ENCODE measurements at regions of chr1 and their contacts with region 1.

Region 1: GRCh38 chr1:155277070-155277895 is at the start of gene HCN3:
- DNase-seq: peak; percentile 98
- H3K4me3 ChIP-seq: peak within 1 kb of the TSS; percentile 82
- H3K27ac ChIP-seq: peak within 1 kb of the TSS; percentile 21
- H3K4me1 ChIP-seq: peaks cover 39% of the 10 kb centered on the region
- CTCF ChIP-seq: peak; percentile 79
- total RNA-seq, gene HCN3: 4.9 and 6.7 TPM in 2 replicates

Region 2: DNA sequence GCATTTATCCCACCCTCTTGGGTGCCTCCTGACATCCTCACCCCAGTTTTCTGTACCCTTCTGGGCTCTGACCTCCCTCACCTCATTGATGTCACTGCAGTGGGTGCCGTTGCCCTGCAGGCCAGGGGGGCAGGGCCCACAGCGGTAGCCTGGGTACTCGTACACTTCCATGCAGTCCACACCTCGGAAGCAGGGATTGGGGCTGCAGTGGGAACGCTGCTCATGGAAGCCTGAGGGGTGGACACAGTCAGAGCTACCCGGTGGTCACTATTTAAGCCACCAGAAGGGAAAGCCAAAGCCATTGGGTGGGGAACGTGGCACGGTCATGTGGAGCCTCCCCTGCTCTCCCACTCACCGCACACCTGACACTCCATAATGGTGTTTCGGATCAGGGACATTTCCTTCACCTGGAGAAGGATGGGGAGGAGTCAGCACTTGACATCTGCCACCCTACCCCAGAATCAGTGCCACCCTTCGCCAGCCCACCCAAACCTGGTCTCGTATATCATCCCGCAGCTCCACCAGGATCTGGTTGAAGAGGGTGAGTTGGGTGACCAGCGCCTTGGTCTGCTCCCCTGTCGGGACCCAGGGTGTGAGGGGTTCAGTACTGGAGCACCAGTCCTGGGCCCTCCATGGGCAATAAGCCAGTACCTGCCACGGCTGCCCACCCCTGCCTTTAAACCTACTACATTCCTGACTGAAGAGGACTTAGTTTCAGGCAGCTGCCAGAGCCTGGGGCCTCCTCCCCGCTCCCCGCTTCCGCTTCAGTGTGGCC is 74.4 kb before region 1 on chr1:
- CTCF ChIA-PET with region 1: no interaction called
- POLR2A ChIA-PET with region 1: no interaction called
- intact Hi-C with region 1: no loop called
- DNase-seq: no peak
- H3K4me3 ChIP-seq: no peak overlapping the region
- H3K27ac ChIP-seq: no peak overlapping the region
- H3K4me1 ChIP-seq: peaks cover 11% of the 10 kb centered on the region
- CTCF ChIP-seq: no peak

Region 3: GRCh38 chr1:155261852-155262673 is 15.2 kb before region 1 on chr1 and contains the start of gene SCAMP3:
- CTCF ChIA-PET with region 1: no interaction called
- POLR2A ChIA-PET with region 1: interaction called, 13 read pairs
- intact Hi-C with region 1: no loop called
- DNase-seq: peak; percentile 96
- H3K4me3 ChIP-seq: peak within 1 kb of the TSS; percentile 84
- H3K27ac ChIP-seq: peak within 1 kb of the TSS; percentile 51
- H3K4me1 ChIP-seq: peaks cover 17% of the 10 kb centered on the region
- CTCF ChIP-seq: no peak
- total RNA-seq, gene SCAMP3: 45.4 and 58.3 TPM in 2 replicates

Region 4: DNA sequence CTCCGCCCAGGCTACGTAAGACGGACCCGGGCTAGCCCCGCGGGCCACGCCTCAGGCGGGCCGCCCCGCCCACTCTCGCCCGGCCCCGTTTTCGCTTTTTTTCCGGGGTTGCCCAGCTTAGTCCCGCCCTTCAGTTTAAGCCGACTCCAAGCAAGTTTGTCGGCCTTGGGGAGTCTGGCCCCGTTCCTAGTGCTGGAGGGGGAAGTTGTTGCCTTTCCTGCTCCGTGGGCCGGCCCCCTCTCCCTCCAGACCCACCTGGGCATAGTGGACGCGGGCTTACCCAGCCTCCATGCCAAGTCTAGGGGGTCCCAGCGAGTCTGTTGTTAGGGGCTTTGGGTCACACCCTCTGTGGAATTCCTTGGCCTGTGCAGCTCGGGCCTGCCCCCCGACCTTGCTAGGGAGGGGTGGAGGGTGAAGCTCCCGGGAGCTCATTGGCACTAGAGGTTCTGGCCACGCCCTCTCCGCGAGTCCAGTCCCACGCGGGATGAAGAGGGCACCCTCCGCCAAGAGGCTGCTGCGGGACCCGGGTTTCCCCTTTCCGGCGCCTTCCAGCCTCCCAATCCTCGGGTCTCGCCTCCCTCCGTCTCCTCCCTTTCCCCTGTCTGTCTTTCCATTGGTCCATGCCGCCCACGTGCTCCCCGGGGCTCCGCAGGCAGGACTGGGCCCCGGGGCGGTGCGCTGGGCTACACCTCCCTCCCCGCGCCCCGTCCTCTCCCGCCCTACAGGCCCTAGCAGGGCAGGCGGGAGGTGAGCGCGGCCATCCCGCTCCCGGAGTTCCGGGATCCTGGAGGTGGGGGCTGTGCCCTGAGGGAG is 46.7 kb after region 1 on chr1:
- CTCF ChIA-PET with region 1: no interaction called
- POLR2A ChIA-PET with region 1: interaction called, 4 read pairs
- intact Hi-C with region 1: loop called (anchors 1 kb)
- DNase-seq: peak; percentile 83
- H3K4me3 ChIP-seq: peak overlapping the region; percentile 78
- H3K27ac ChIP-seq: peak overlapping the region; percentile 53
- H3K4me1 ChIP-seq: peaks cover 23% of the 10 kb centered on the region
- CTCF ChIP-seq: no peak

Measured in OCI-LY7 (cell line).